ENCODE measurements at regions of chr1 and their contacts with region 1.

Region 1: DNA sequence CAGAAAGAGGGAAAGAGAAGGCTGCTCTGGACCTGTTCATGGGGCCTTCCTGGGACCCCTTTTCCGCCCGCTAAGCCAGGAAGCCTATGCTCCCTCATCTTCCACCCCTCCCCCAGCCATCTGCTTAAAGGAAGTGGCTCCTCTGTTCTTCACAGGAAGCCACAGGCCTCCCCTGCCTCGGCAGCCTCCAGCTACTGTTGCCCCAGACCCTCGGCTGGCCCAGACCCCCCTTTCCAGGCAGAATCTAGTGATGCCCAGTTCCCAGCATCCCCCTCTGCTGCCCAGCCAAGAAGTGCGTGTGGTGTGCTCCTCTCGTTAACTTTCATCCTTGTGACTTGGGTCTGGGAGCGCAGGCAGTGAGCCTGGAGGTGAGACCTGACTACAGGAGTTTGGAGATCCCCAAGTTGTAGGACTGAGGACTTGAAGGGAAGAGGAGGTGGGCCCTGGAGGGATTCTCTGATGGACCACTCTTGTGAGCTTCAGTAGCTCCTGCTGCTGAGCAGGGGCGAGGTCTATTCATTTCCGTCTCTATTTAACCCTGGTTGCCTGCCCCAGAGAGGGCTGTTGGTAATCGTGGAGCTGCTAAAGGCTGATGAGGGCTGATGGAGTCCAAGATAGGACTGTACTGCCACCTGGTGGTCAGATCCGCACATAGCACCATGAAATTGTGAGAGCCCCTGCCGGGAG is 9.1 kb downstream of the IFI6 start:
- DNase-seq: peak; percentile 94
- ATAC-seq: peak; percentile 83
- H3K4me3 Mint-ChIP-seq: peak overlapping the region; percentile 75
- H3K27ac Mint-ChIP-seq: peak overlapping the region; percentile 98
- H3K4me1 Mint-ChIP-seq: peaks cover 68% of the 10 kb centered on the region
- H3K27me3 Mint-ChIP-seq: no peaks in the 10 kb centered on the region

Region 2: DNA sequence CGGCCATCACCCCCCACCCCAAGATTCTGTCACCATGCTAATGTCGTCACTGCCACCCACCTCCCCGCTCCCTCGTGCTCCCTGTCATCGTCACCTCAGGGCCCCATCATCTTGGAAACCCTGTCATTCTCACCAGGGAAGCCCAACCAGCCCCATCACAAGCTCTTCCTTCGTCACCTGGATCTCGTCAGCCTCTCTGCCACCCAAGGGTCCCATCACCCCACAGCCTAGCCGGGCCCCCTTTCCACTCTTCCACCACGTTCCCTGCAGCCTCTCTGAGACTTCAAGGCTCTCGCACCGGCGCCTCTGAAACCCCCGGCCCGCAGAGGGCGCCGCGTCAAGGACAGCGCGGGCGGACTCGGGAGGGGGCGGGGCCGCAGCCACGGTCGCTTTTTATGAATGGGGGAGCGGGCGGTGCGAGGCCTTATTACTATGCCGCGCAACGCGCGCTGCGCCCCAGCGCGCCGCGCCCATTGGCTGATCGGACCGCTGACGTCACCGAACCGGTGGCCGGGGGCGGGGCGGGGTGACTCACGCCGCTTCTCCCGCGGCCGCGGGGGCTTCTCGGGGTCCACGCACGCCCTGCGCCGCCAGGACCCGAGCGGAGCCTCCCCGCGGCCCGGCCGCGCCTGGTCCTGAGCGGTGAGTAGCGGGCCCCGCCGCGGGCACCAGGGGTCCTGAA is 270.6 kb before region 1 on chr1 and contains the start of gene GPR3:
- CTCF ChIA-PET with region 1: interaction called, 12 read pairs
- POLR2A ChIA-PET with region 1: no interaction called
- DNase-seq: peak; percentile 95
- ATAC-seq: peak; percentile 94
- H3K4me3 Mint-ChIP-seq: peak within 1 kb of the TSS; percentile 74
- H3K27ac Mint-ChIP-seq: peak within 1 kb of the TSS; percentile 82
- H3K4me1 Mint-ChIP-seq: peaks cover 25% of the 10 kb centered on the region
- H3K27me3 Mint-ChIP-seq: peaks cover 12% of the 10 kb centered on the region
- total RNA-seq, gene GPR3: 0.47 to 0.66 TPM

Region 3: GRCh38 chr1:27556781-27557595 is 105.9 kb before region 1 on chr1:
- CTCF ChIA-PET with region 1: interaction called, 52 read pairs
- POLR2A ChIA-PET with region 1: interaction called, 7 read pairs
- DNase-seq: peak; percentile 84
- ATAC-seq: peak; percentile 74
- H3K4me3 Mint-ChIP-seq: peak overlapping the region; percentile 3
- H3K27ac Mint-ChIP-seq: peak overlapping the region; percentile 84
- H3K4me1 Mint-ChIP-seq: peaks cover 33% of the 10 kb centered on the region
- H3K27me3 Mint-ChIP-seq: no peaks in the 10 kb centered on the region

Region 4: DNA sequence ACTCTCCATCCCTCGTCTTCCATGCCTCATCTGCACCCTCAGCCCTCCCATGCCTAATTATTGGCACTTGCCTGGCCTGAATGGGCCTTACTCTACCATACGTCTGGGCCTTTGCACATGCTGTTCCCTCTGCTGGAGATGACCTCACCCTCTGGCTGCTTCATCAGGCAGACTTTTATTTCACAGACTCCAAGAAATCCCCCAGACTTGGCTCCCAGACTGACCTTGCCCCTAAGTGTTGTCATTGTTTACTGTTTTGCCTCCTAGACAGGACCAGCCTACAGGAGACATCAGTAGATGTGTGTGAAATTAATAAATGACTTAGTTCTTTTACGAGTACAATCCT is 53.7 kb before region 1 on chr1:
- CTCF ChIA-PET with region 1: interaction called, 320 read pairs
- POLR2A ChIA-PET with region 1: interaction called, 81 read pairs
- DNase-seq: no peak
- ATAC-seq: no peak
- H3K4me3 Mint-ChIP-seq: no peak overlapping the region
- H3K27ac Mint-ChIP-seq: no peak overlapping the region
- H3K4me1 Mint-ChIP-seq: peaks cover 33% of the 10 kb centered on the region
- H3K27me3 Mint-ChIP-seq: no peaks in the 10 kb centered on the region

Region 5: GRCh38 chr1:27624467-27625178 is 38.2 kb before region 1 on chr1:
- CTCF ChIA-PET with region 1: interaction called, 124 read pairs
- POLR2A ChIA-PET with region 1: interaction called, 12 read pairs
- DNase-seq: no peak
- ATAC-seq: peak; percentile 11
- H3K4me3 Mint-ChIP-seq: no peak overlapping the region
- H3K27ac Mint-ChIP-seq: no peak overlapping the region
- H3K4me1 Mint-ChIP-seq: peaks cover 25% of the 10 kb centered on the region
- H3K27me3 Mint-ChIP-seq: peaks cover 9% of the 10 kb centered on the region

Region 6: GRCh38 chr1:27643701-27644625 is 18.9 kb before region 1 on chr1:
- CTCF ChIA-PET with region 1: interaction called, 57 read pairs
- POLR2A ChIA-PET with region 1: interaction called, 6 read pairs
- DNase-seq: peak; percentile 76
- ATAC-seq: peak; percentile 97
- H3K4me3 Mint-ChIP-seq: no peak overlapping the region
- H3K27ac Mint-ChIP-seq: no peak overlapping the region
- H3K4me1 Mint-ChIP-seq: peaks cover 21% of the 10 kb centered on the region
- H3K27me3 Mint-ChIP-seq: no peaks in the 10 kb centered on the region

Region 7: DNA sequence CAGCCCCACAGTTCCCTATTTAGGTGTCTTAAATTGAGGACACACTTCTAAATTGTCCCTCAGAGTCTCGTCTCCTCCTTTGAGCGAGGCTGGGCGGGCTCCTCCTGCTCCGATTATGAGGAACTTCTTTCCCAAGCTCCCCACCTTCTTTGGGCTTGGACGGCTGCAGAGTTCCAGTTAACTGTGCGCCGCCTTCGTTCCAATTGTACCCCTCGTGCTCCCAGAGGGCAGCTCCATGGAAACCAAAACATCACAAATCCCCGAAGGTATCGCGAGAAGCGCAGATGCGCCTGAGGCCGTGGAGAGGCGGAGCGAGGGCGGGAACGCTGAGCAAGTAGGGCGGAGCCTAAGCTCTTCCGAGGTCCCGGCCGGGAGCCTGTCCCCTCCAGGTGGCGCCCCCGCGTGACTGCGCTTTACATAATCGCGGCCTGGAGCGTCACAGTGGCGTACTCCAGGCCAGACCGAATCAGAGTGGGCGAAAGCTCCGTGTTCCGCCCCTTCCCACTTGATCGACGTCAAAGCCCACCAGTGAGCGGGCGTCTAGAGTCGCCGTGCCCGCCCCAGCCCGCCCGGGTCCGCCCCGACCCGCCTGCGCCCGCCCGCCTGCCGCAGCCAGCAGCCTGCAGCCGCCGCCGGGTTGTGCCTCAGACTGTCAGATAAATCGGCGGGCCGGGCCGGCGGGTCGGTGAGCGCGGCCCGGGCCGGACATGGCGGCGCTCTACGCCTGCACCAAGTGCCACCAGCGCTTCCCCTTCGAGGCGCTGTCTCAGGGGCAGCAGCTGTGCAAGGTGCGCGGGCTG is 62.7 kb after region 1 on chr1 and contains the start of gene FAM76A:
- CTCF ChIA-PET with region 1: interaction called, 18 read pairs
- POLR2A ChIA-PET with region 1: interaction called, 3 read pairs
- DNase-seq: peak; percentile 100
- ATAC-seq: peak; percentile 94
- H3K4me3 Mint-ChIP-seq: peak within 1 kb of the TSS; percentile 86
- H3K27ac Mint-ChIP-seq: peak within 1 kb of the TSS; percentile 93
- H3K4me1 Mint-ChIP-seq: peaks cover 21% of the 10 kb centered on the region
- H3K27me3 Mint-ChIP-seq: no peaks in the 10 kb centered on the region
- total RNA-seq, gene FAM76A: 14.6 to 17.5 TPM

Region 8: DNA sequence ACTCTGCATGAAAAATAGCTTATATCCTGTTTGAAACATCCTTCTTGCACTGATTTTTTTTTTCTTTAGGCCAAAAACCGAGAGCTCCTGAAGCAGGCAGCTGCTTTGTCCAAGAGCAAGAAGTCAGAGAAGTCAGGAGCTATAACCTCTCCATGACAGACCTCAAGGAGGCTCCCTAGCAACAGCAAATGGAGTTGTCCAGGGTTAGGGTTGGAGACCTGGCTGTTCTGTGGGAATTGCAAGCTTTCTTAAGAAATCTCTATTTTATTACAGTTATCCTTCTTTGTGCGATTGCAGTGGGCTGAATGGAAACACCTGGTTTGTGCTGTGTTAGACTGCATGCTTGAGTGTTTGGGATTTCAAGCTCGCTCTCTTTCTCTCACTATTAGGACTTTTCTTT is 97.6 kb after region 1 on chr1:
- CTCF ChIA-PET with region 1: no interaction called
- POLR2A ChIA-PET with region 1: no interaction called
- DNase-seq: no peak
- ATAC-seq: no peak
- H3K4me3 Mint-ChIP-seq: no peak overlapping the region
- H3K27ac Mint-ChIP-seq: no peak overlapping the region
- H3K4me1 Mint-ChIP-seq: no peaks in the 10 kb centered on the region
- H3K27me3 Mint-ChIP-seq: no peaks in the 10 kb centered on the region

Measured in activated CD8-positive, alpha-beta T cell treated with anti-CD3 and anti-CD28 coated beads, Interleukin-2, amount 10 ng/mL, durations not matched to agents 7 days and 5 days (primary cell).